ENCODE measurements at regions of chr10 and their contacts with region 1.

Region 1: DNA sequence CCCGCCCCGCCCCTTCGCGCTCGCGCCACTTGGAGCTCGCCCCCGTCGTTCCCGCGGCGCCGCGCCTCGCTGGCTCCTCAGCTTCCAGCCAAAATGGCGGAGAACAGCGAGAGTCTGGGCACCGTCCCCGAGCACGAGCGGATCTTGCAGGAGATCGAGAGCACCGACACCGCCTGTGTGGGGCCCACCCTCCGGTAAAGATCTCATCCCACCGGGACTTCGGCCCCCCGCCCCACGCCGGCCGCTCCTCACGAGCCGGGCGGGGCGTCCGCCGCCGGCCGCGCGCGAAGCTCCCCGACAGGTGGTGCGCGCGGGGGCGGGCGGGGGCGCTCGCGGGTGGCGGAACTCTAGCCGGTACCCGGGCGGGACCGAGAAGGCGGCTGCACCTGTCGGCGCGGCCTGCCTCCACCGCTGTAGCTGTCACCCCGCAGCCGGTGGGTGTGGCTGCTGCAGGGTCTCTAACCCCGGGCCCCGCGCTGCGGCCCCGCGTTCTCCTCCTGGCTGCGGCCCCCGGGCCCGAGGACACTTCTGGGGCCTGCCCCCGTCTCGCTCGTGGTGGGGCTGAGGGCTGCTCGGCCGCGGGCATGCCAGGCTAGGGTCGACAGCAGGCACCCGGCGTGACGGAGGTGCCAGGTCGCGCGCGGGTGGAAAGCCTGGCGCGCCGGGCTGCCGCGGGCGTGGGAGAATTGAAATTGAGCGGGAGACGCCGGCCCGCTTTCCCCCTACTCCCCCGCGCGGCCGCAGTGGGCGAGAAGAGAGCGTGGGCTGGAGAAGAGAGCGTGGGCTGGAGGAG is at the start of gene EXOC6:
- DNase-seq: peak; percentile 86
- H3K4me3 Mint-ChIP-seq: peak within 1 kb of the TSS; percentile 88
- H3K27ac Mint-ChIP-seq: peak within 1 kb of the TSS; percentile 61
- H3K4me1 Mint-ChIP-seq: peaks cover 24% of the 10 kb centered on the region
- H3K27me3 Mint-ChIP-seq: no peaks in the 10 kb centered on the region
- total RNA-seq, gene EXOC6: 7.6 to 9.3 TPM

Region 2: DNA sequence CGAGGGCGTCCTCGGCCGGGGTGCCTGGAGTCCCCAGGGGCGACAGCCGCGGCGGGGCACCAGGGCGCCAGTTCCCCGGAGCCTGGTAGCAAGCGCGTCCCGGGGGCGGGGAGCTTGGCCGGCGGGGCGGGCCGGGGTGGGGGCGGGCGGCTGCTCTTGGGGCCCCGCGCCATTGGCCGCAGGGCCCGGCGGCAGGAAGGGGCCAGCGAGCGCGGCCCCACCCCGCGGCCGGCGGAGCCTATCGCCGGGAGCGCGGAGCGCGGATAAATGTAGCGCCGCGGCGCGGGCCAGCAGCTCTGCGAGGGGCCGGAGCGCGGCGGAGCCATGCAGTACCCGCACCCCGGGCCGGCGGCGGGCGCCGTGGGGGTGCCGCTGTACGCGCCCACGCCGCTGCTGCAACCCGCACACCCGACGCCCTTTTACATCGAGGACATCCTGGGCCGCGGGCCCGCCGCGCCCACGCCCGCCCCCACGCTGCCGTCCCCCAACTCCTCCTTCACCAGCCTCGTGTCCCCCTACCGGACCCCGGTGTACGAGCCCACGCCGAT is 158.9 kb before region 1 on chr10 and contains the start of gene HHEX:
- CTCF ChIA-PET with region 1: no interaction called
- intact Hi-C with region 1: loop called (anchors 1 kb)
- DNase-seq: no peak
- H3K4me3 Mint-ChIP-seq: peak within 1 kb of the TSS; percentile 58
- H3K27ac Mint-ChIP-seq: no peak within 1 kb of the TSS
- H3K4me1 Mint-ChIP-seq: peaks cover 19% of the 10 kb centered on the region
- H3K27me3 Mint-ChIP-seq: peaks cover 64% of the 10 kb centered on the region
- total RNA-seq, gene HHEX: 0.15 TPM in 1 of 2 experiments, not detected in the other

Region 3: DNA sequence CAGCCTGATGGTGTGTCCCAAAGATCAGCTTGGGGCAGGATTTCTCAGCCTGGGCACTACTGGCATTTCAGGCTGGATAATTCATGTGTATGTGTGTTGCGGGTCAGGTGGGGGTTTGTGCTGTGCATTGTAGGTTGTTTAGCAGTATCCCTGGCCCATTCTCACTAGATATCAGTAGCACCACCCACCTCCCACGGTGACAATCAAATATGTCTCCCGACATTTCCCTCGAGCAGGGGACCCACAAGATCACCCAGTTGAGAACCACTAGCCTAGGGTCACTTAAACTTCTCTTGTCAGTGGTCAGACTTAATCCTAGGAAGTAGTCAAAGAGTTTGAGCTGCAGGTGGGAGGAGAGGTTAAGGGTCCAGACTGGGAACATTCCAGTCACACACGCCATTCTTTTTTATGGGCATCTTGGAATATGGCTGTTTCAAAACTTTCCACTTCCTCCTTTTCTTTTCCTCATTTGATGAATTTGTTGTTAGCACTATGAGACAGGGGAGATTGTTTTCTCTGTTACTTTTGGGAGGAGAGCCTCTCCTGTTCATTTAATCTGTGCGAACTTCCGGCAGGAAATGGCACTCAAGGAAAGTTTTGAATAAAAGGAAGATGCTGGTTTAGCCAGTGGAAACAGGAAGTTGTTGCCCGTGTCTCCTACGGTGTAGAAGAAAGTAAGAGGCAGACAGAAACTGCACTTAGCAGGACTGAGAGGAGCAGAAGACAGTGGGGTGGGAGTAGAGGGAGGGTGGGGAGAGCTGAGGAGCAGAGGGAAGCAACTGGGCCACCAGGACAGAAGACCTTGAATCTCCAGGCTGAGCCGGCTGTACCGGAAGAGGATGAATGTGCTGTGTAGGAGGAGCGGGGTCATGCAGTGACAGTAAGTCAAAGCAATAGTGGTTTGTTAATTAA is 17.9 kb before region 1 on chr10:
- CTCF ChIA-PET with region 1: interaction called, 28 read pairs
- intact Hi-C with region 1: no loop called
- DNase-seq: peak; percentile 54
- H3K4me3 Mint-ChIP-seq: peak overlapping the region; percentile 73
- H3K27ac Mint-ChIP-seq: peak overlapping the region; percentile 86
- H3K4me1 Mint-ChIP-seq: peaks cover 15% of the 10 kb centered on the region
- H3K27me3 Mint-ChIP-seq: no peaks in the 10 kb centered on the region

Region 4: GRCh38 chr10:92886334-92886961 is 37.8 kb after region 1 on chr10:
- CTCF ChIA-PET with region 1: interaction called, 19 read pairs
- intact Hi-C with region 1: no loop called
- DNase-seq: no peak
- H3K4me3 Mint-ChIP-seq: no peak overlapping the region
- H3K27ac Mint-ChIP-seq: no peak overlapping the region
- H3K4me1 Mint-ChIP-seq: peaks cover 2% of the 10 kb centered on the region
- H3K27me3 Mint-ChIP-seq: no peaks in the 10 kb centered on the region

Measured in activated naive CD4-positive, alpha-beta T cell treated with anti-CD3 and anti-CD28 coated beads for 36 hours (primary cell).